Right cardiac atrium (tissue), 5 donors: ENCODE measurements at regions of chr19 and their contacts with region 1.

Region 1: DNA sequence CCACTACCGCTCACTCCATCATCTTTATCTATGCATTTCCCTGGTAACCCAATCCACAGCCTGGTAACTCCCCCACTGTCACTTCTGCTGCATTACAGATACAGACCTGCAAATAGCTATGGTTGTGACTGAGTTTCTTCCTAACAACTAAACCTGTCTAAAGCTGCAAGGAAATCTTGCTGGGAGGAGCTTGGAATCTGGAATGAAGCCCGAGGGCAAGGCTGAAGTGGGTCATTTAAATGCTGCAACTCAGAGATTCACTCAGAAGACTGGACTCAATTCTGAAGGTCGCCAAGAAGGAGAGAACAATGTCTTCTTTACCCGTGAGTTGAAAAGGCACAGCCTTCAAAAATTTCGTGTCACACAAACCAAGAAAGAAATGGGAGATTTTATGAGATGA is at the start of gene LGALS13:
- DNase-seq: no peak
- ATAC-seq: no peak
- H3K4me3 ChIP-seq: no peak within 1 kb of the TSS
- H3K27ac ChIP-seq: no peak within 1 kb of the TSS
- H3K4me1 ChIP-seq: no peaks in the 10 kb centered on the region
- H3K27me3 ChIP-seq: no peaks in the 10 kb centered on the region
- total RNA-seq, gene LGALS13: not detected

Region 2: DNA sequence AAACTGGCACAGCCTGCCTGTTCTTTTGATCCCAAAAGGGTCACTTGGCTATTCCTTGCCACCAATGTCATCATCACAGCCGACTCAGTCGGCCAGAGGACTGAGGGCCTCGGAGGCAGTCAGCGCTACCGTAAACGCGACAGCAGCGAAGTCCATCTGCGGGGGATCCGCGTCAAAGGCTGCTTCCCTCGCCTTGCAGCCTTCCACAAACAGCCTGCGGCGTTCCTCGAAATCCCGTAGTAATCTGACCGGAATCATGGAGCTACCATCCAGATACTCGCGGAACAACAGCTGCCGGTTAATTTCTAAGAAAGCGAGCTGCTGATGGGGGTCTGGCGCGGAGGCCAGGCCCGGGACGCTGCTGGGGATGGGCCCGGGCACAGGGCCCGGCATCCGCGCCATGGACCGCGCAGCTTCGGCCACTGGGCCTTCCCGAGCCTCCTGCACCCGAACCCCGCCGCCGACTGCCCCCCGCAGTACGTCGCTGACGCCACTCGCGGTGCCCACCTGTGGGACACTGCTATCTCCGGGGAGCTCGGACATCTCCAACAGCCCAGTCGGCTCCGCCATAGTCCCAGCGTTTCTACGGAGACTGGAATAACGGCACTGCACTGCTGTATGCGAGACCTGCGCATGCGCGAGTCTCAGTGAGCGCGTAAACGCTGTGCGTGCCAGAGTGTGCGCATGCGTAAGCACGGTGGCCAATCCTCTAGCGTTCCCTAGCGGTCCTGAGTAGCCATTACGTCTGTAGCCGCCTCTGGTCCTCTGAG is 69.8 kb before region 1 on chr19 and contains the start of gene EID2B:
- intact Hi-C with region 1: no loop called
- DNase-seq: peak; percentile 97 to 99 (median 98)
- ATAC-seq: peak; percentile 98 to 99
- H3K4me3 ChIP-seq: peak within 1 kb of the TSS; percentile 56
- H3K27ac ChIP-seq: peak within 1 kb of the TSS; percentile 71
- H3K4me1 ChIP-seq: no peaks in the 10 kb centered on the region
- H3K27me3 ChIP-seq: no peaks in the 10 kb centered on the region
- total RNA-seq, gene EID2B: 2.3 to 4.3 (median 3.3) TPM

Region 3: GRCh38 chr19:41023193-41023592 is 1420.9 kb after region 1 on chr19:
- intact Hi-C with region 1: loop called in 1 of 4 experiments (anchors 10 kb)
- DNase-seq: no peak
- ATAC-seq: no peak
- H3K4me3 ChIP-seq: no peak overlapping the region
- H3K27ac ChIP-seq: no peak overlapping the region
- H3K4me1 ChIP-seq: no peaks in the 10 kb centered on the region
- H3K27me3 ChIP-seq: no peaks in the 10 kb centered on the region